ENCODE measurements at regions of chr17 and their contacts with region 1.

Region 1: DNA sequence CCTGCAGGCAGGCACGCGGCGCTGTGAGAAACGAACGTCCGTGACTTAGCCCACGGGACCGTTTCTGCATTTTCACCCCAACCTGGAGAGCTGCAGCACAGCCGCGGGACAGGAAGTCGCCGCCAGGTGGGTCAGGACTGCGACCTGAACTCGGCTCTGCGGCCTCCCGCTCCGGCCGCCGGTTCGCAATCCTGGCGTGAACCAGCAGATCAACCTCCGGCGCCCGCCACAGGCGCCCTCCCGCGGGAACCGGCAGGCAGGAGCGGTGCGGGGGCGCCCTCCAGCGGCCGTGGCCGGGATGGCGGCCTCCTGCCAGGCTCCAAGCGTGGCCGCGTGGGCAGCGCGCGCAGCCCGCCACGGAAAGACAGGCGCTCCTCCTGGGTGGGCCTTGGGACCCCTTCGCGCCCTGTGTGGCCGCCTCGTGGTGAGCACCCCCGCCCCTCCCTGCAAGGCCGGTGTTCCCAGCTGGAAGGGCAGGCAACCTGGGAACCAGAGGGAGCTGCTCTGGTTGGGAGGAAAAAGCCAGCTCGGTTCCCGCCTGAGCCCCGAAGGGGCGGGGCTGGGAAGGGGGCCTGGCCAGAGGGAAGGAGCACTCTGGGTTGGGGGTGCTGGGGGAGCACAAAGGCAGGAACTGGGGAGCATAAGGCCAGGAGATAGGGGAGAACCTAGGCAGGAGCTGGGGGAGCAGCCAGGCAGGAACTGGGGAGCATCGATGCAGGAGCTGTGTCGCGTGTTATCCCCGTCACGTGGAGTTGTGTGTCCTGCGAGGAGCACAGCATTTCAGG is 28.2 kb downstream of the ACTG1 start:
- DNase-seq: peak; percentile 93
- H3K4me3 ChIP-seq: peak overlapping the region; percentile 46 to 61 (median 49)
- H3K27ac ChIP-seq: no peak overlapping the region
- H3K4me1 ChIP-seq: peaks cover 56 to 75% (median 71%) of the 10 kb centered on the region in 4 donors
- H3K27me3 ChIP-seq: peaks cover 0 to 4% (median 0%) of the 10 kb centered on the region in 4 donors
- CTCF ChIP-seq: peak; percentile 100
- EP300 ChIP-seq: no peak
- POLR2A ChIP-seq: no peak

Region 2: GRCh38 chr17:81253358-81254131 is 230.8 kb before region 1 on chr17:
- intact Hi-C with region 1: loop called (anchors 2 kb)
- DNase-seq: no peak
- H3K4me3 ChIP-seq: no peak overlapping the region
- H3K27ac ChIP-seq: peak overlapping the region; percentile 85 to 91 (median 88)
- H3K4me1 ChIP-seq: peaks cover 14 to 57% (median 47%) of the 10 kb centered on the region in 4 donors
- H3K27me3 ChIP-seq: no peaks in the 10 kb centered on the region
- CTCF ChIP-seq: peak; percentile 88 to 92 (median 90)
- EP300 ChIP-seq: no peak
- POLR2A ChIP-seq: no peak

Region 3: GRCh38 chr17:81346090-81346907 is 138.1 kb before region 1 on chr17:
- intact Hi-C with region 1: loop called (anchors 2 kb)
- DNase-seq: peak; percentile 100
- H3K4me3 ChIP-seq: peak overlapping the region; percentile 70 to 96 (median 80)
- H3K27ac ChIP-seq: peak overlapping the region; percentile 81 to 98 (median 92)
- H3K4me1 ChIP-seq: peaks cover 10 to 36% (median 31%) of the 10 kb centered on the region in 4 donors
- H3K27me3 ChIP-seq: peaks cover 0 to 6% (median 0%) of the 10 kb centered on the region in 4 donors
- CTCF ChIP-seq: no peak
- EP300 ChIP-seq: no peak
- POLR2A ChIP-seq: peak; percentile 78

Region 4: DNA sequence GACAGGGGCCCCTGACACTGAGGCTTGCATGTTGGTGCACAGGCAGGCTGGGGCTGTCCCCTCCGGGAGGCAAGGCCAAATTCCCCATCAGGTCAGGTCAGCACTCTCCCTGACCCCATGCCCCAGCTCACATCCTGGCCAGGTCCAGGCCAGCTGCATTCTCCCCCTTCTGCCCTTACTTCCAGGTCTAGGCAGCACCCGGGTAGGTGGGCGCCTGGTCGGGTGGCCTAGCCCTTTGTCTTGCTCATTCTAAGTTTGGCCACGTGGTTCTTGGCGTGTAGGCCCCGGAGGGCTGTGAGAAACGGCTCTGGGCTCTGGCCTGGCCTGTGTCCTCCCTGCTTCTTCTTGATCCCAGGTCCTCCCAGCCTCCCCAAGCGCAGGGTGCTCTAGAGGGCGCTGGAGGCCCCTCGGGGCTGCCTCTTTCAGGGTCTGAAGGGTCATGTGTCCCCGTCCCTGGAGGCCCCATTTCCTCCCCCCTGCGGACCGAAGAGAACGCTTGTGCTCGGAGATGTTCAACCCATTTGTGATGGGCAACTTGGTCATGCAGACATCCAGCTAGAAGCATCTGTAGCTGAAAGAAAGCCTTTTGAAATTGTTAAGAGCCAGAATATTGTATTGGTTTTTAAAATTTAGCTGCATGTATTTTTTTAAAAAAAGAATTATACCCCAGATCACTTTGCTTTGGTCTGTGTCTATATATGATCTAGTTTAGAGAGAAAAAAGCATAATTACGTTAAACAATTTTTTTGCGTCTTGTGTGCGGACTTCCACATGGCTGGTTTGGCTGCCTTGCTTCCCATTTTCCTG is 82.5 kb before region 1 on chr17:
- intact Hi-C with region 1: loop called (anchors 5 kb)
- DNase-seq: no peak
- H3K4me3 ChIP-seq: peak overlapping the region; percentile 79 to 95 (median 90)
- H3K27ac ChIP-seq: peak overlapping the region; percentile 96 to 100 (median 99)
- H3K4me1 ChIP-seq: peaks cover 71 to 85% (median 84%) of the 10 kb centered on the region in 4 donors
- H3K27me3 ChIP-seq: no peaks in the 10 kb centered on the region
- CTCF ChIP-seq: peak; percentile 32 to 35 (median 34)
- EP300 ChIP-seq: no peak
- POLR2A ChIP-seq: no peak